H1 (cell line): ENCODE measurements at regions of chr19 and their contacts with region 1.

Region 1: GRCh38 chr19:10388957-10389356 is 8.6 kb upstream of the TYK2 start:
- DNase-seq: peak; percentile 77 to 99
- H3K4me3 ChIP-seq: no peak overlapping the region
- H3K27ac ChIP-seq: no peak overlapping the region
- H3K4me1 ChIP-seq: peaks cover 0 to 3% (median 0%) of the 10 kb centered on the region in 4 experiments; a peak in 1 of 7 replicates
- H3K27me3 ChIP-seq: no peaks in the 10 kb centered on the region
- CTCF ChIP-seq: peak; percentile 82 to 94 (median 94)
- EP300 ChIP-seq: no peak
- POLR2A ChIP-seq: no peak
- RAD21 ChIP-seq: peak; percentile 87 to 90

Region 2: DNA sequence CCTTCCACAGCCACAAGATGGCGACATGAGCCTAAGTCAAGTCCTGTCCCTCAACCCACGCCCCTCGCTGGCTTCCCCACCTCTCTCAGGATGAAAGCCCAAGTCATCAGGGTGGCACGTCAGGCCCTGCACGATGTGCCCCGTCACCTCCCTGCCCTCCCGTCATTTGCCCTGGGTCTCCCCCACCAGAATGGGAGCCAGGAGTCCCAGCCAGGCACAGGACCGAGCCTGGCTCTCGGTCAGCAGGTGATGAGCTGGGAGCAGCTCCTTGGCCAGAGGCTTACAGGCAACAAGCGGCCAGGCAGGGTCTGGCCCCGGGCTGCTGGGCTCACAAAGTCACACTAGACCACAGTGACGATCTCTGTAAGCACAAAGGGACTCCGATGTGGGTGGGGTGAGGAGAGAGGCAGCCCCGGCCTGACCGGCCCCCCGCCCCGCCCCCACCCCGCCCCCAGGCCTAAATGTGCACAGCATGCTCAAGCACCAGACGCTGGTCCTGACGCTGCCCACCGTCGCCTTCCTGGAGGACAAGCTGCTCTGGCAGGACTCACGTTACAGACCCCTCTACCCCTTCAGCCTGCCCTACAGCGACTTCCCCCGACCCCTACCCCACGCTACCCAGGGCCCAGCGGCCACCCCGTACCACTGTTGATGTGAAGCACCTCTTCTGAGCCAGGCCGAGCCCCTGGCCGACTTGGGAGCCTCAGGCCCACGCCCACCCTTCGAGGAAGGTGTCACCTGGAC is 129.6 kb before region 1 on chr19:
- CTCF ChIA-PET with region 1: interaction called, 122 read pairs
- POLR2A ChIA-PET with region 1: interaction called, 8 read pairs
- DNase-seq: peak; percentile 69 to 91
- H3K4me3 ChIP-seq: no peak overlapping the region
- H3K27ac ChIP-seq: no peak overlapping the region
- H3K4me1 ChIP-seq: peaks cover 0 to 2% (median 0%) of the 10 kb centered on the region in 4 experiments; a peak in 2 of 7 replicates
- H3K27me3 ChIP-seq: no peaks in the 10 kb centered on the region
- CTCF ChIP-seq: peak; percentile 76 to 86 (median 81)
- EP300 ChIP-seq: no peak
- POLR2A ChIP-seq: no peak
- RAD21 ChIP-seq: peak; percentile 76 to 80

Region 3: GRCh38 chr19:10292206-10292788 is 96.7 kb before region 1 on chr19:
- CTCF ChIA-PET with region 1: interaction called, 16 read pairs
- POLR2A ChIA-PET with region 1: interaction called, 5 read pairs
- DNase-seq: peak; percentile 82 to 100
- H3K4me3 ChIP-seq: peak overlapping the region; percentile 38 to 67 (median 60); a peak in 7 of 8 replicates
- H3K27ac ChIP-seq: no peak overlapping the region
- H3K4me1 ChIP-seq: peaks cover 0 to 51% (median 24%) of the 10 kb centered on the region in 4 experiments; a peak in 6 of 7 replicates
- H3K27me3 ChIP-seq: peaks cover 58 to 96% (median 89%) of the 10 kb centered on the region in 4 experiments
- CTCF ChIP-seq: no peak
- EP300 ChIP-seq: no peak
- POLR2A ChIP-seq: no peak; a peak in 1 of 3 replicates
- RAD21 ChIP-seq: no peak

Region 4: GRCh38 chr19:10321412-10321786 is 67.6 kb before region 1 on chr19:
- CTCF ChIA-PET with region 1: interaction called, 13 read pairs
- POLR2A ChIA-PET with region 1: no interaction called
- DNase-seq: no peak
- H3K4me3 ChIP-seq: no peak overlapping the region
- H3K27ac ChIP-seq: no peak overlapping the region
- H3K4me1 ChIP-seq: no peaks in the 10 kb centered on the region
- H3K27me3 ChIP-seq: no peaks in the 10 kb centered on the region; a peak in 1 of 7 replicates
- CTCF ChIP-seq: no peak
- EP300 ChIP-seq: no peak
- POLR2A ChIP-seq: no peak
- RAD21 ChIP-seq: no peak

Region 5: DNA sequence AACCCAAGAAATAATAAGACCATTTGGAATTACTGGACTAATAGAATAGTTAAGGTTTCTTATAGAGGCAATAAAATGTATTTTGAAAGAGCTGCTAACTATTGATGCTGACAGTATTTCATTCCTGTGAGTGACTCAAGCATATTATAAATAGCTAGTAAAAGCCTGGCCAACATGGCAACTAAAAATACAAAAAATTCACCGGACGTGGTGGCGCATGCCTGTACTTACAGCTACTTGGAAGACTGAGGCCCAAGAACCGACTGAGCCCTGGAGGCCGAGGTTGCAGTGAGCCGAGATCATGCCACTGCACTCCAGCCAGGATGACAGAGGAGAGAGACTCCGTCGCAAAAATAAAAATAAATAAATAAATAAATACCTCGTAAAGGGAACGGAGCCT is 44.2 kb before region 1 on chr19:
- CTCF ChIA-PET with region 1: interaction called, 10 read pairs
- POLR2A ChIA-PET with region 1: interaction called, 3 read pairs
- DNase-seq: no peak
- H3K4me3 ChIP-seq: no peak overlapping the region
- H3K27ac ChIP-seq: no peak overlapping the region
- H3K4me1 ChIP-seq: no peaks in the 10 kb centered on the region; a peak in 1 of 7 replicates
- H3K27me3 ChIP-seq: no peaks in the 10 kb centered on the region
- CTCF ChIP-seq: no peak
- EP300 ChIP-seq: no peak
- POLR2A ChIP-seq: no peak
- RAD21 ChIP-seq: no peak

Region 6: DNA sequence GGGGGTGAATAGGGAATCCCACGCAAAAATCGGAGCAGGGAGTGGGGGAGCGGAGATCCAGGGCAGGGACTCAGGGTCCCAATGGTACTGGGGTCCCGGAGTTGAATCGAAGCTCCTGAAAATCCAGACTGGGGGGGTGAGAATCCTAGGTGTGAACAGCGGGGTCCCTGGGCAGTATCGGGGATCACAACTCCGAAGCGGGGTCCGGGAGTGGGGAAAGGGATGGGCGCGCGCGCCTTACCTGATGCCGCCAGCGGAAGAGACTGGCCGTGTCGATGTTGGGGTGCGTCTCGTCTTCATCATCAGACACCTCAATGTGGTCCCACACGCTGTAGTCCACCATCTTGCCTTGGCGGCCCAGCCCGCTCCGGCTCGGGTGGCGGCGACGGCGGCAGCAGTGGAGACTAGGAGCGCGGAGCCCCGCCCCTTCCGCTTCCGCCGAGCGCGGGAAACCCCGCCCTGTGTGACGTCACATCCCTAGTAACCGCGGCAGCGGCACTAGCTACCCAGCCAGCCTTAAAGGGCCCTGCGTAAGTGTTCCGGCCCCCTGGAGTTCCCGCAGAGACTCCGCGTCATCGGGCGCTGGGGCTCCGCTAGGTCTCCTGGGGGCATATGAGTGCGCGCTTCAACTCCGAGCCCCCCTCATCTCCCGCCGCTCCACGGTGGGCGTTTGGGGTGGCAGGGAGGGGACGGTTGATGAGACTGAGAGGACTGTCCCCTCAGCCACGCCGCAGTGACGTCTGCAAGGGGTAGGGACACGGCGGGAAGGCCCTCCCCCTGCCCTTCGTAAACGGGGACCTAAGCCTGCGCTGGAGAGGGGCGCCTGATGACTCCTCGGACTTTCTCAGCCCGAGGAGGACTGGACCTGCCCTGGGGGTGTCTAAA is 14.4 kb after region 1 on chr19 and contains the start of gene CDC37:
- CTCF ChIA-PET with region 1: interaction called, 12 read pairs
- POLR2A ChIA-PET with region 1: interaction called, 5 read pairs
- DNase-seq: peak; percentile 86 to 99
- H3K4me3 ChIP-seq: peak within 1 kb of the TSS; percentile 71 to 98 (median 98)
- H3K27ac ChIP-seq: peak within 1 kb of the TSS; percentile 78
- H3K4me1 ChIP-seq: peaks cover 3 to 8% (median 5%) of the 10 kb centered on the region in 4 experiments; a peak in 5 of 7 replicates
- H3K27me3 ChIP-seq: peaks cover 3 to 15% (median 9%) of the 10 kb centered on the region in 4 experiments; a peak in 5 of 7 replicates
- CTCF ChIP-seq: peak in 2 of 3 experiments; percentile 0 to 10; a peak in 2 of 4 replicates
- EP300 ChIP-seq: no peak
- POLR2A ChIP-seq: peak in 1 of 2 experiments; percentile 95; a peak in 2 of 3 replicates
- RAD21 ChIP-seq: no peak
- total RNA-seq, gene CDC37: 162 and 164 TPM in 2 replicates

Region 7: DNA sequence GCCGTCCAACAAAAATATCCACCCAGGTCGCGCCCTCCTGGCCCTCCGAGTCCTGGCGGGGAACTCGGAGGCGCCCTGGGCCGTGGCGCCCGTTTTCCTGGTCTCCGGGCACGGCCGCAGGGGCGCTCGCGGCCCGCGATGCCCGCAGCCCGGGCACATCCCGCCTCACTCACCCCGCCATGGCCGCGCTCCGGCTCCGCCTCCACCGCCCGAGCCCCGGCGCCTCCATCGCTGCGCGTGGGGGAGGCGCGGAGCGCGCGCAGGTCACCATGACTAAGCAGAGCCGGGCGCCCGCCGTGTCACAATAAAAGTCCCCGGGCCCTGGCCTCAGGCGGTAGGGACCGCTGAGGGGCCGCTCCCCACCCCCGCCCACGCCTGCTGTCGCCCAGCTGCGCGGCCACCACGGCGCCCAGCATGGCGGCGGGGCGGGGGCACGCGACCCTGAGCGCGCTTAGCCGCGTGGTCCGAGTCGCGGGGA is 113.6 kb after region 1 on chr19:
- CTCF ChIA-PET with region 1: no interaction called
- POLR2A ChIA-PET with region 1: no interaction called
- DNase-seq: peak; percentile 73 to 92
- H3K4me3 ChIP-seq: peak overlapping the region; percentile 64 to 96 (median 86)
- H3K27ac ChIP-seq: peak overlapping the region; percentile 96
- H3K4me1 ChIP-seq: peaks cover 3 to 24% (median 13%) of the 10 kb centered on the region in 4 experiments
- H3K27me3 ChIP-seq: no peaks in the 10 kb centered on the region
- CTCF ChIP-seq: peak in 1 of 3 experiments; percentile 6; a peak in 1 of 4 replicates
- EP300 ChIP-seq: peak; percentile 11 to 92; a peak in 2 of 3 replicates
- POLR2A ChIP-seq: peak; percentile 69 to 82; a peak in 2 of 3 replicates
- RAD21 ChIP-seq: peak in 1 of 2 experiments; percentile 2; a peak in 1 of 4 replicates